ENCODE measurements at regions of chr12 and their contacts with region 1.

Region 1: GRCh38 chr12:21828779-21829178 is 54.3 kb upstream of the KCNJ8 start:
- DNase-seq: peak; percentile 62 to 65
- ATAC-seq: peak; percentile 84 to 89
- H3K4me3 ChIP-seq: peak overlapping the region in 1 of 4 donors; percentile 11
- H3K27ac ChIP-seq: peak overlapping the region; percentile 61 to 87 (median 74)
- H3K4me1 ChIP-seq: peaks cover 12 to 57% of the 10 kb centered on the region in 2 donors
- H3K27me3 ChIP-seq: no peaks in the 10 kb centered on the region
- CTCF ChIP-seq: no peak
- POLR2A ChIP-seq: no peak

Region 2: DNA sequence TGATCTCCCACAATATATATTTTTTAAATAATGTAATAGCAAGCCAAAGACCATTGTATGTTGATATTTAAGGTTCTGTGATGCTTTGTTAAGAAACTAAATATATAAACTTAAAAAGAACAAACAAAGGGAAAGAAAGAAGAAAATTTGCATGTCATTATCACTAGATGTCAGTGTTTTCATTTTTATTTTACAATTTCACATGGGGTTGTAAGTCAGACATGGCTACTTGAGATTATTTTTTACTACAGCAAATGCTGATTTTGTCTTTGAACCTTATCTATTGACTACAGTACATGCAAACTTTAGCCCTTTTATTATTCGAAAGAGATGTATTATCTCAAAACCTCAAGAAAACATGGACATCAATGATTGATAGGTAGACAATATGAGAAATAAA is 1097.5 kb before region 1 on chr12:
- in situ Hi-C with region 1: no loop called
- intact Hi-C with region 1: no loop called
- DNase-seq: no peak
- ATAC-seq: no peak
- H3K4me3 ChIP-seq: no peak overlapping the region
- H3K27ac ChIP-seq: no peak overlapping the region
- H3K4me1 ChIP-seq: no peaks in the 10 kb centered on the region
- H3K27me3 ChIP-seq: no peaks in the 10 kb centered on the region
- CTCF ChIP-seq: no peak
- POLR2A ChIP-seq: no peak

Region 3: GRCh38 chr12:21881965-21882364 is 53.2 kb after region 1 on chr12:
- in situ Hi-C with region 1: no loop called
- intact Hi-C with region 1: loop called (anchors 2 kb)
- DNase-seq: peak; percentile 59 to 68
- ATAC-seq: peak; percentile 88 to 95
- H3K4me3 ChIP-seq: no peak overlapping the region
- H3K27ac ChIP-seq: peak overlapping the region; percentile 79 to 82 (median 81)
- H3K4me1 ChIP-seq: peaks cover 46% of the 10 kb centered on the region in 2 donors
- H3K27me3 ChIP-seq: no peaks in the 10 kb centered on the region
- CTCF ChIP-seq: no peak
- POLR2A ChIP-seq: no peak

Measured in gastrocnemius medialis (tissue), 4 donors.